Motor neuron (in vitro differentiated cells): ENCODE measurements at regions of chr1 and their contacts with region 1.

Region 1: GRCh38 chr1:180154325-180155181 is at the start of gene QSOX1:
- ATAC-seq: peak; percentile 85 to 90 (median 89)
- H3K4me3 ChIP-seq: peak within 1 kb of the TSS; percentile 59 to 89 (median 83)
- H3K27ac ChIP-seq: peak within 1 kb of the TSS; percentile 85 to 88
- H3K4me1 ChIP-seq: peaks cover 27 to 30% of the 10 kb centered on the region in 2 donors
- total RNA-seq, gene QSOX1: 18.9 to 221 (median 34.7) TPM

Region 2: DNA sequence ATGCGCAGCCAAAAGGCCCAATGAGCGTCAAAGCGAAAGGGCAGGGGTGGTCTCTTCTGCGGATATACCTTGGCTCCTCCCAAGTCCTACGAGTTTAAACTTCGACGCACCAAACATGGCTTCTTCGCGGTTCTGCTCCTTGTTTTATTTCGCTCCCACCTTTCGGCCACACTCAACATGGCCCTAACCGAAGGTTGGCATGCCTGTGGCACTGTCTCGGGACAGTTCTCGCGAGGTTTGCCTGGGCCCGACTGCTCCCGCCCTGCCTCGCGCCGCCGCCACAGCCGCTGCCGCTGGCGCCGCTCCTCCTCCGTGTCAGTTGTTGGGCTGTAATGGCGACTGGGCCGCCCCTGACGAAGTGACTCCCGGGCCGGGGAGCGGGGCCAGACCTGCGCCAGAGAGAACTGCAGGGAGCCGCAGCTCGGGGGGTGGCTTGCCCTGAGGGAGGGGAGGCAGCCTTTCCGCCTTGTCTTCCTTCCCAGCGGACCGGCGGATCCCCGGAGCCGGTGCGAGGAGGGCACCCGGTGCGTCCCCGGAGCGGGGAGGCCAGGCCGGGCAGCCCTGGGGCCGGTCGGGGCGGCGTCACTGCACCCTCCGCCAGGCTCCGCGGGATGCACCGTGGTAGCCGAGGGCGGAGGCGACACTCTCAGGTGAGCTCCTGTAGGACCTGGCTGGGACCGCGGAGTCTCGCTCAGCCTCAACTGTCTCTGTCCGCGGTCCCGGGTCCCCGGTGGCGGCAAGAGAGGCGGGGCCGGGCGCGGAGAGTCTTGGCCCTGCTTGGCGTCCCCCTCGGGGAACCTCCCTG is 199.9 kb before region 1 on chr1 and contains the start of gene CEP350:
- in situ Hi-C with region 1: loop called in 1 of 9 experiments (anchors 25 kb)
- ATAC-seq: peak; percentile 92 to 99 (median 98)
- H3K4me3 ChIP-seq: peak within 1 kb of the TSS; percentile 64 to 96 (median 92)
- H3K27ac ChIP-seq: peak within 1 kb of the TSS; percentile 91 to 96
- H3K4me1 ChIP-seq: peaks cover 11 to 16% of the 10 kb centered on the region in 2 donors
- total RNA-seq, gene CEP350: 21.8 to 65.4 (median 49.5) TPM

Region 3: GRCh38 chr1:180057883-180058396 is 96.6 kb before region 1 on chr1:
- in situ Hi-C with region 1: loop called in 1 of 9 experiments (anchors 25 kb)
- ATAC-seq: no peak
- H3K4me3 ChIP-seq: no peak overlapping the region
- H3K27ac ChIP-seq: no peak overlapping the region
- H3K4me1 ChIP-seq: no peaks in the 10 kb centered on the region